IMR-90 (cell line): ENCODE measurements at regions of chr6 and their contacts with region 1.

Region 1: DNA sequence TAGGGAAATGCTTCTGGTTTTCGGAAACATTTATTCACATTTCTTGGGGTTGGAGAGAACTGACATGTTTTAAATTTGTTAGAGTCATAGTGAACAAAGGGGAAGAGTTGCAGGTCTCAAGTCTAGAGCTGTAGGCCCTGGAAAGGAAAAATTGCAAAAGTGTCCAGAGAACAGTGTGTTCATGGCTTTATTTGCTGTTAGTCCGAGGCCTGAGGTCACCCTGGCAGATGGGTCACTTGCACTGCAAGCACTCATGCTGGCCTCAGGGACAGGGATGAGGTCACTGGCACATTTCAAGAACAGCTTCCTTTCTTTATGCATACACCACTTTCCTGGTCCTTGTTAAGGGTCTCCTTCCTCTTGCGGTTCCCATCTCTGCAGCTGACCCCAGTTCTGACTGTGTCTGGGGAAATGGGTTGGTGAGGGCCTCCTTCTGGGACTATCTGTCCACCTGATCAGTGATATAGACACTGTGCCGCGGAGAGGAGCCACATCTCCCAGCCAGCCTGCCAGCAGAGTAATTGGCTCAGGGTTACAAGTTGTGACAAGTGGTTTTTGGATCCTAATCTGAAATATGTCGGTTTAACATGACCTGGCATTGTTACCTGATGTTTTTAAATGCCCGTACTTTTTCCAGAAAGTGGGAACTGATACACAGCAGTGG is 194.0 kb downstream of the EYA4 start:
- DNase-seq: no peak
- ATAC-seq: no peak
- H3K4me3 ChIP-seq: no peak overlapping the region
- H3K27ac ChIP-seq: no peak overlapping the region
- H3K4me1 ChIP-seq: peaks cover 4% of the 10 kb centered on the region
- H3K27me3 ChIP-seq: no peaks in the 10 kb centered on the region
- CTCF ChIP-seq: no peak
- POLR2A ChIP-seq: no peak
- RAD21 ChIP-seq: no peak

Region 2: DNA sequence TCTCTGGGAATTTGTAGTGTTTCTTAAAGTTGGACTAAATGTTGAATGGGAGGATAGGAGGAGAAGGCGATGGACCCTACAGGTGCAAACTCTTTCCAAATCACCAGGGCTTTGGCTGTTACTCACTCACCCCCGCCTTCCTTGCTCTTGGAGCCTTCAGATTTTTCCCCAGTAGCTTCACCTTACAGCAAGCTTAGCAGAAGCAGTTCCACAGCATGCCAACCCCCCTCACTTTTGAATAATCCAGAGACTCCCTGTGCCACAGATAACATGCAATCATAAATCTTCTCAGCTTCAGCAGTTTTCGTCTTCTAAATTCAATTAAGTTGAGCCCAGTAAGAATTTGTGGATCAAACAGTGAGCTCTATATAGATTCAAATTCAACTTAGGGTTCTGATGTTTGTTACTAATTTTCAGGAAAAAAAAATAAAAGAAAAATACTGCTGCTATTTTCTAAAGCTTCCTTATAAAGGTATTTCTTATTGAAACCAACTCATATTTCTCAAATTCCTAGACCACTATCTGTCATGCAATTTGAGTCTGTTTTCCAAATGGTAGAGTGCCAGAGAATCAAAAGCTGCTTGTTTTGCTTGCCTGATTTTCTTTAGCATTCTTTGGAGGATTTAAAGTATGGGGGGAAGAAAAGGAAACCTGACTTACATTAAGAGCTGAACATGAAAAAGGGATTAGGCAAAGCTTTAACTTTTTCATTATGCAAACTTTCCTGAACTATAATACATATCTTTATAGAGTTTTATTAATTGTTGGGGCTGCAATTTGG is 27.7 kb before region 1 on chr6:
- CTCF ChIA-PET with region 1: no interaction called
- POLR2A ChIA-PET with region 1: no interaction called
- dilution Hi-C with region 1: no loop called
- in situ Hi-C with region 1: no loop called
- intact Hi-C with region 1: loop called (anchors 1 kb)
- DNase-seq: no peak
- ATAC-seq: no peak
- H3K4me3 ChIP-seq: no peak overlapping the region
- H3K27ac ChIP-seq: no peak overlapping the region
- H3K4me1 ChIP-seq: 0 out of 2 replicates have a peak, but pooled peaks cover 3% of the 10 kb centered on the region
- H3K27me3 ChIP-seq: no peaks in the 10 kb centered on the region
- CTCF ChIP-seq: no peak
- POLR2A ChIP-seq: no peak
- RAD21 ChIP-seq: no peak